ACHN (cell line): ENCODE measurements at regions of chr17 and their contacts with region 1.

Region 1: DNA sequence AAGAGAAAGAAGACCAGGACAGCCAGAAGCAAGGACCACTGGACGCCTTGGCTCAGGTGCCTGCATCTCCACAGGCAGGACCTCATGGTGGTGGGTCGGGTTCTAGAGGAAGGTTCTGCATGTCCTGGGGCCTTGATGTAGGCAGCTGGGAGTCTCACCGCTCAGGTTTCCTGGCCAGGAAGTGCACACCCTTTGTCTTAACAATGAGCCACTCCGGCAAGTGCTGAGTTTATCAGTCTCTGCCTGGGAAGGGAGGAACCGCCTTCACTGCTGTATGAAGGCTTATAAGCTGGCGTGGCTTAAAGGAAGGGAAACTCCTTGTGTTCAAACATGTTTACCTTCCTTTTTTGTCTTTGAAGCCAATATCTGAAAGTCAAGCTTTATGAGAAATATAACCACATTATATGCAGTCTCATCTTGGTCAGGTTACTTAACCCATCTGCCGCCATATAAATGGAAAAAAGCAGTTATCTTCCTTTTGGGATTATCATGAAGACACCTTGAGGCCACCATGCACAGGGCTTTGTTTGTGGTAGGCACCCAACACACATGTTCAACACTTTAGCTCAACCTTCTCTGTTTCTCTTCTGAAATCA is at the start of gene ST6GALNAC1:
- DNase-seq: no peak

Region 2: DNA sequence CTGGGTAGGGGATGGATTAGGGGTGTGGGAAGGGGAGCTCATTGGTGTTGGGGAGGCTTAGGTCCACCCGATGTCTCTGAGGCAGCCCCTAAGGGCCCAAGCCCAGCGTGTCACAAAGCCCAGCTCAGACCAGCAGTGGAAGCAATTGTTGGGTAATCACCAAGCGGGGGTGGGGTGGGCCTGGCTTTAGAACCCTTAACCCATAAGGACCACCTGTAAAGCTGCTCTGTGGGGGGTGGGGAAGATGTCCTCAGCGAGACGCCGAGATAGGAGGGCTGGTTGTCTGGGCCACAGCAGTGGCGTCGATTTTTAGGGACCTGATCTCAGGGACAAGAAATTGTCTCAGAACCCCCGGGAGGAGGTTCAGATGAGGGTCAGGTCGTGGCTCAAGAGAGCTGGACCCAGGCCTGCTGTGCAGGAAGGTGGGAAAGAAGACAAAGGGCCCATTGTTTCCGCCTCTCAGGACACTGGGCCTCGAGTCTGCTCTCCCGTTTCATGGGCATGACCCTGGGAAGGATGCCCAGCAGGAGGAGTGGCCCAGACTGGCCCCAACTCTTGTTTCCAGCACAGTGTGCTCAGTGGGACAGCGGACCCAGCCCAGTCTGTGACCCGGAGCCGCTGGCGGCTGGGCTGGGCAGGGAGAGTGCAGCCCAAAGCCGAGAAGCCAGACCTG is 73.9 kb before region 1 on chr17:
- in situ Hi-C with region 1: loop called (anchors 10 kb)
- DNase-seq: no peak